Right ventricle myocardium superior (tissue), 1 donor: ENCODE measurements at regions of chr13 and their contacts with region 1.

Region 1: GRCh38 chr13:110593430-110594130 is 21.8 kb upstream of the NAXD start:
- DNase-seq: no peak
- ATAC-seq: peak; percentile 95

Region 2: GRCh38 chr13:110274687-110275086 is 318.9 kb before region 1 on chr13:
- intact Hi-C with region 1: no loop called
- DNase-seq: no peak
- ATAC-seq: peak; percentile 40

Region 3: GRCh38 chr13:110471833-110472162 is 121.8 kb before region 1 on chr13:
- intact Hi-C with region 1: no loop called
- DNase-seq: peak; percentile 60
- ATAC-seq: peak; percentile 71

Region 4: DNA sequence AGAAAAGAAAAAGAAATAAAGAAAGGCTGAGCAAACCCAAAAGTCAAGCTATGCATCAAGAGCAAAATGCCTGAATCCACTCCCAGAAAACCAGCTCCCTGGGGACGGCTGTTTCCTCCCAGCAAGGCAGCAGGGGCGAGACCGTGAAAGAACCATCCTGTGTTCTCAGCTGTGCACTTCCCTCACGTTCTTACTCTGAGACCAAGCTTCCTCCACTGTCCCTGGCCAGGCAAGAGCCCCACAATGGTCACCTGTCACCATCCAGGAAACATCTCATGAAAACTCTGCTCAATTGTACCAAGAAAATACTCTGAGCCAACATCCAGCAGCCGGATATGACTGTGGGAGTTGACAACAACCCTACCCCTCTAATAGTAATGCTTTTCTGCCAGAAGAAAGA is 54.9 kb before region 1 on chr13:
- intact Hi-C with region 1: no loop called
- DNase-seq: peak; percentile 74
- ATAC-seq: peak; percentile 37

Region 5: GRCh38 chr13:110819203-110820014 is 225.8 kb after region 1 on chr13:
- intact Hi-C with region 1: loop called (anchors 5 kb)
- DNase-seq: peak; percentile 88
- ATAC-seq: peak; percentile 96

Region 6: GRCh38 chr13:111046590-111047141 is 453.1 kb after region 1 on chr13:
- intact Hi-C with region 1: loop called (anchors 10 kb)
- DNase-seq: no peak
- ATAC-seq: peak; percentile 44